Naive thymus-derived CD8-positive, alpha-beta T cell (primary cell): ENCODE measurements at regions of chr19 and their contacts with region 1.

Region 1: GRCh38 chr19:2070436-2070827 is 19.4 kb upstream of the MKNK2 start:
- DNase-seq: no peak
- ATAC-seq: peak in 1 of 2 donors; percentile 8
- H3K4me3 Mint-ChIP-seq: no peak overlapping the region
- H3K27ac Mint-ChIP-seq: peak overlapping the region in 5 of 10 donors; percentile 56 to 91 (median 87)
- H3K4me1 Mint-ChIP-seq: peaks cover 10 to 46% (median 29%) of the 10 kb centered on the region in 4 donors
- H3K27me3 Mint-ChIP-seq: no peaks in the 10 kb centered on the region

Region 2: GRCh38 chr19:2016041-2016807 is 54.2 kb before region 1 on chr19:
- POLR2A ChIA-PET with region 1: interaction called, 13 read pairs
- DNase-seq: peak in 7 of 10 donors; percentile 37 to 85 (median 51)
- ATAC-seq: peak; percentile 33 to 50
- H3K4me3 Mint-ChIP-seq: peak overlapping the region; percentile 47 to 75 (median 56)
- H3K27ac Mint-ChIP-seq: peak overlapping the region in 9 of 10 donors; percentile 9 to 85 (median 68)
- H3K4me1 Mint-ChIP-seq: peaks cover 8 to 35% (median 26%) of the 10 kb centered on the region in 4 donors
- H3K27me3 Mint-ChIP-seq: no peaks in the 10 kb centered on the region

Region 3: DNA sequence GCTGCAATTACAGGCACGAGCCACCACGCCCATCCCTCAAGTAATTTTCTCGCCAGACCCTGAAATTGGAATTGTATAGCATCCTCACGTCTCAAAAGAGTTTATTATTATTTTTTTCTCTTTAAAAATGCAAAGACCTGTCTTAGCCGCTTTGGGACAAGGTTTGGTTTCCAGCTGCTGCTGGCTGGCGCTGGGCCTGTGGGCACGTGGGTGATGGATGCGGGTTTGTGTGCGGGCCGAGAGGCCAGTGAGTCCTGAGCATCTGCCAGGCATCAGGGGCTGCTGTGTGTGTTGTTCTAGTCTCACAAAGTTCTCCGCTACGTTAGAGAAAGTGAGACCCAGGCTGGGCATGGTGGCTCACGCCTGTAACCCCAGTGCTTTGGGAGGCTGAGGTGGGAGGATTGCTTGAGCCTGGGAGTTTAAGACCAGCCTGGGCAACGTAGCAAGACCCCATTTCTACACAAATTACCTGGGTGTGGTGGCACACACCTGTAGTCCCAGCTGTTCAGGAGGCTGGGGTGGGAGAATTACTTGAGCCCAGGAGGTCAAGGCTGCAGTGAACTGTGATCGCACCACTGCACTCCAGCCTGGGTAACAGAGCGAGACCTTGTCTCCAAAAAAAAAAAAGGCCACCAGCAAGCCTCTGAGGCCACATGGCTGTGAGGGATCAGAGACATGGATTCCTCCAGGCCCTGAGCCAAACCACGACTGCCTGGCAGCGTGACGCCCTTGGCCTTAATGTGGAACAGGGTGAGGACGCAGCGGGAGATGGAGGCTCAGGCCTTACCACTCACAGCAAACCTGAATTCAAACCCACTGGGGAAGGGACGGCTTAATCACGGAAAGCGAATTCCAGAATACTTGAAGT is 285.0 kb after region 1 on chr19:
- POLR2A ChIA-PET with region 1: no interaction called
- DNase-seq: no peak
- ATAC-seq: no peak
- H3K4me3 Mint-ChIP-seq: no peak overlapping the region
- H3K27ac Mint-ChIP-seq: no peak overlapping the region
- H3K4me1 Mint-ChIP-seq: peaks cover 1 to 3% (median 2%) of the 10 kb centered on the region in 4 donors
- H3K27me3 Mint-ChIP-seq: peaks cover 0 to 3% (median 1%) of the 10 kb centered on the region in 5 donors